ENCODE measurements at regions of chr1 and their contacts with region 1.

Region 1: GRCh38 chr1:26602378-26602959 is 72.9 kb downstream of the RPS6KA1 start:
- DNase-seq: no peak
- ATAC-seq: peak; percentile 80

Region 2: GRCh38 chr1:26181586-26182382 is 420.7 kb before region 1 on chr1:
- intact Hi-C with region 1: no loop called
- DNase-seq: no peak
- ATAC-seq: no peak

Region 3: GRCh38 chr1:26686795-26687194 is 84.3 kb after region 1 on chr1:
- intact Hi-C with region 1: loop called (anchors 5 kb)
- DNase-seq: no peak
- ATAC-seq: no peak

Region 4: GRCh38 chr1:26787706-26788514 is 185.4 kb after region 1 on chr1 and contains the start of gene PIGV:
- intact Hi-C with region 1: loop called (anchors 2 kb)
- DNase-seq: peak; percentile 94
- ATAC-seq: peak; percentile 91
- total RNA-seq, gene PIGV: 5.5 TPM

Region 5: DNA sequence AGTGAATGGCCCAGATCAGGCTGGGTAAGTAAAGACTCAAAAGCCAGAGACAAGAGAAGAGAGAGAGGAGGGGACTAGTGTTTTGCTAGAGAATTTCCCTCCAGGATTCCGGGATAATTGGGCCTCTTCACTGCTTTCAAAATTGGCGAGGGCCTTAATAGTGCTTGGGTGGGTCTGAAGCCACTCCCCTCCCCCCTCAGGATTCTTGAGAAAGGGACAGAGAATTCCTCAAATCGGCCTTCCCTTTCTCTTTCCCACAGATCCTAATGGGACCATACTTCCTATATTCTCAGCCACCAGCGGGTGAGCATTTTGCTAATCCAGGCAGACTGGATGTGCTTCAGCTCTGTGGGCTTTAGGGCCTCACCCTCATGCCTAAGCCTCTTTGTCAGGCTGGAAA is 272.4 kb after region 1 on chr1:
- intact Hi-C with region 1: loop called (anchors 5 kb)
- DNase-seq: no peak
- ATAC-seq: no peak

Region 6: GRCh38 chr1:26959722-26960615 is 357.5 kb after region 1 on chr1 and contains the start of gene KDF1:
- intact Hi-C with region 1: no loop called
- DNase-seq: no peak
- ATAC-seq: peak; percentile 61
- total RNA-seq, gene KDF1: 0.35 TPM

Measured in Right ventricle myocardium superior (tissue), 1 donor.